ENCODE measurements at regions of chr1 and their contacts with region 1.

Region 1: GRCh38 chr1:147627435-147628110 is 42.8 kb downstream of the ACP6 start:
- DNase-seq: peak; percentile 67
- ATAC-seq: peak; percentile 83

Region 2: GRCh38 chr1:147494998-147495580 is 132.5 kb before region 1 on chr1:
- intact Hi-C with region 1: loop called (anchors 5 kb)
- DNase-seq: peak; percentile 76
- ATAC-seq: peak; percentile 96

Region 3: GRCh38 chr1:147676290-147677053 is 48.9 kb after region 1 on chr1:
- intact Hi-C with region 1: no loop called
- DNase-seq: no peak
- ATAC-seq: no peak

Measured in left ventricle myocardium superior (tissue), 1 donor.